Activated CD8-positive, alpha-beta memory T cell treated with anti-CD3 and anti-CD28 coated beads, Interleukin-2, amount 10 ng/mL, durations not matched to agents 7 days and 5 days (primary cell): ENCODE measurements at regions of chr2 and their contacts with region 1.

Region 1: GRCh38 chr2:70340921-70341765 is 39.3 kb upstream of the FAM136A start:
- DNase-seq: peak; percentile 43
- ATAC-seq: no peak
- H3K4me3 Mint-ChIP-seq: no peak overlapping the region
- H3K27ac Mint-ChIP-seq: no peak overlapping the region
- H3K4me1 Mint-ChIP-seq: no peaks in the 10 kb centered on the region
- H3K27me3 Mint-ChIP-seq: peaks cover 25% of the 10 kb centered on the region

Region 2: GRCh38 chr2:70261501-70261900 is 79.6 kb before region 1 on chr2:
- CTCF ChIA-PET with region 1: no interaction called
- DNase-seq: no peak
- ATAC-seq: no peak
- H3K4me3 Mint-ChIP-seq: no peak overlapping the region
- H3K27ac Mint-ChIP-seq: no peak overlapping the region
- H3K4me1 Mint-ChIP-seq: peaks cover 29% of the 10 kb centered on the region
- H3K27me3 Mint-ChIP-seq: no peaks in the 10 kb centered on the region

Region 3: DNA sequence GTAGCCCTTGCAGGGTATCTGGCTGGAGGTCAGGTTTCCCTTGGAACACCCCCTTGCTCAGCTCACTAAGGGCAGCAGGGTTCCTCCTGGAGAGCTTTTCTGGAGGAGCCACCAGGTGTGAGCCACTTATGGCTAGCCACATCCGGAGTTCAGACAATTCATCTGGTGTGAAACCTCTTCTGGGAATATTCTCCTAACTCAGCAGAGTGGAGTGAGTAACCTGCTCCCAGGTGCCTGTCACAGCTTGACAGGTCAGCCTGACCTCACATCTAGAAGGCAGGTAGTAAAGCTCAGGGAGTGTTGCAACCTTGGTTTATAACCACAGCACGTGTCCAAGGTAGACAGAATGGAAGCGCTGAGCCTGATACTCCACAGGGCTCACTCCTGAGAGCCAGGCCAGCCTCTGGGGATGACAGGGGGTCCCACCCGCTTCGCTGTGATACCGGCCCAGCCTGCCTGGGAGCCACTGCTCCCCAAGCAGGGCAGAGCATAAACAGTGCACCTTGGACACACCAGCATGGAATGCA is 275.1 kb after region 1 on chr2:
- CTCF ChIA-PET with region 1: interaction called, 36 read pairs
- DNase-seq: no peak
- ATAC-seq: no peak
- H3K4me3 Mint-ChIP-seq: no peak overlapping the region
- H3K27ac Mint-ChIP-seq: no peak overlapping the region
- H3K4me1 Mint-ChIP-seq: peaks cover 6% of the 10 kb centered on the region
- H3K27me3 Mint-ChIP-seq: peaks cover 14% of the 10 kb centered on the region

Region 4: DNA sequence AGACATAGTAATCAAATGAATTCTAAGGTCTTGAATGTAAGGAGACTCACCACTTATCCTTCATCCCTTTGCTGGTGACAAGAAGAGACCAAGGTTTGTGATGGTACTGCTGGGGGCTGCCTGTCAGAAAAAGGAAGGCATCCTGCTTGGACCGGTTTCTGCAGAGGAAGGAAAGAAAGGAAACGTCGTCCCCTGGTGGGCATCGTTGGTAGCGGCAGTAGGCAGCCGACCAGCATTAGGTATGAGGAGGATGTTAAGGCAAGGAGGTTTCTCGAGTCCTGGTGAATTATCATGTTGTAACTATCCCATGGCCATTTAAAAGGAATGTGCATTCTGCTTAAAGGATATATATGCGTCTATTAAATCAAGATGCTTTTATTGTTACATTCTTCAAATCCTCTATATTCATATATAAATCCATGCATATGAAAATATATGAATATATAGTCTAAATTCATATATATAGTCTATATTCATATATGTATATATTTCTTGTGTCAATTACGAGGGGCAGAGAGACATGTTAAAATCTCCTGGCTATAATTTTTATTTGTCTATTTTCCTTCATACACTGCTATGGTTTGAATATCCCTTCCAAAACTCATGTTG is 306.8 kb after region 1 on chr2:
- CTCF ChIA-PET with region 1: interaction called, 12 read pairs
- DNase-seq: peak; percentile 79
- ATAC-seq: peak; percentile 86
- H3K4me3 Mint-ChIP-seq: no peak overlapping the region
- H3K27ac Mint-ChIP-seq: no peak overlapping the region
- H3K4me1 Mint-ChIP-seq: peaks cover 2% of the 10 kb centered on the region
- H3K27me3 Mint-ChIP-seq: peaks cover 29% of the 10 kb centered on the region